Psoas muscle (tissue), 8 donors: ENCODE measurements at regions of chr1 and their contacts with region 1.

Region 1: DNA sequence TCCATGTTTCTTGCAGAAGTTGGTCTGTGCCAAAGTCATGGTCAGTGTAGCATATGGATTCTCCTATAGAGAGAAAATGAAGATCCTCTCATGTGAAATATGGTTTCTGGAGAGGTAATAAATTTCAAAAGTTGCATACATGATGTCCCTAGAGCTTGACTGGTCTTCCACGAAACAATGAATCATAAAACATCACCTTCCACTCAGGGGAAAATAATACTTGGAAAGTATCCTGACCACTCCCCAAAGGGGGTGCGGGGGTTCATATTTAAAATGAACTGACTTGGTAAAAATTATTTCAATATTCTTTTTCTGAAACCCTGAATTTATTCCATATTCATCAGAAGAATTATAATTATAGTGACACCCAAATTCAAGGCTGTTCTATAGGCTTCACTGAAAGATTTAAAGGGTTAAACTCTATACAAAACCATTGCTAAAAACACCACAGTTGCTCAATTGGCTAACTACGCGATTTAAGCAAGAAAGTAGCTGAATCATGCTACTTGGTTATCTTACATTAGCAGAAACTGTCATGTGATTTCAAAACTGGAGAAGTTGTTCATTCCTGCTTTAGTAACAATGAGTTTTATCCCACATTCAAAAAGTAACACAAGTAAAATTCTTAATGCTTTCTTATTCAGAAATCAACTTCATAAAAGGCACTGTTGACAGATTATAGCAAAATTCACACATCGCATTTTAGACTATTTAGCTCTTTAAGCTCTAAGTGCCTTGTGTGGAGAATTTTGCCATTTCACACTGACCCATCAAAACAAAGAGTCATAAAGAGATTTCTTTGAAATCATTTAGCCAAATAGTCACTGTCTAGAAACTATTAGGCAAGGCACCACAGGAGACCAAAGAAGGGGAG is 5.3 kb downstream of the CREG1 start:
- DNase-seq: no peak
- ATAC-seq: no peak
- H3K4me3 ChIP-seq: no peak overlapping the region
- H3K27ac ChIP-seq: peak overlapping the region; percentile 66
- H3K4me1 ChIP-seq: peaks cover 41% of the 10 kb centered on the region
- H3K27me3 ChIP-seq: no peaks in the 10 kb centered on the region
- CTCF ChIP-seq: no peak

Region 2: DNA sequence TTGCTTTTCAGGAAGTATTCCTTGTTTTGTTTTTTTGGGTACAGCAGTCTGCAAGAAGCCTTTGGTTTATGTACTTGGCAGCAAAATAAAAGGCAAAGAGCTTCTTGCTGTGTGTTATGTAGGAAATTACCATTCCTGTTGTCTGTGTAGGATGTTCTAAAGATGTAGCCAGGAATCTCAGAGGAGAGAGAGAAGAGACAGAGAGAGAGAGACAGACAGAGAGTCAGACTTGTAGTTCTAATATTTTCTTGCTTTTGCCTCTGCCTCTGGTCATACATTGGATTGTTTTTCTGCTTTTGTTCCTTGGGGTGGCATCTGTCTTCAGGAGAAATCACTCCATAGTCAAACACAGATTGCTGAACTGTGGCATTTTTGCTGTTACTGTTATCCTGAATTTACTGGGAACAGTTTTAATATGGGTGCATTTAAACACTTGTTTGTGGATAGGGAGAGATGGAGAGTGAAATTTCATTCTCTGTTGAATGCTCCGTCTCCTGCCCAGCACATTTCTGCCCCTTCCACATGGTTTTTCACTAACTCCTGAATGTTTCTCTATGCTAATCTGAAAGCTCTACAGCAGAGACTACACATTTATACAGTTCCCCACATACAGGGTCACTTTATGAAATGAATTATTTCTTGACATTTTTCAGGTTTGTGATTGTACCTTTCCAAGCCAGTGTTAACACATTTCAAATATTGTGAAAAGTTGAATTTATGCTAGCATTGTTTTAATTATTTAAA is 277.8 kb before region 1 on chr1:
- intact Hi-C with region 1: loop called in 1 of 2 experiments (anchors 5 kb)
- DNase-seq: no peak
- ATAC-seq: no peak
- H3K4me3 ChIP-seq: no peak overlapping the region
- H3K27ac ChIP-seq: no peak overlapping the region
- H3K4me1 ChIP-seq: peaks cover 45% of the 10 kb centered on the region
- H3K27me3 ChIP-seq: no peaks in the 10 kb centered on the region
- CTCF ChIP-seq: no peak

Region 3: GRCh38 chr1:168045311-168045710 is 497.0 kb after region 1 on chr1:
- intact Hi-C with region 1: no loop called
- DNase-seq: no peak
- ATAC-seq: peak in 2 of 4 donors; percentile 39 to 63
- H3K4me3 ChIP-seq: no peak overlapping the region
- H3K27ac ChIP-seq: peak overlapping the region; percentile 31
- H3K4me1 ChIP-seq: peaks cover 21% of the 10 kb centered on the region
- H3K27me3 ChIP-seq: no peaks in the 10 kb centered on the region
- CTCF ChIP-seq: no peak